Naive thymus-derived CD4-positive, alpha-beta T cell (primary cell): ENCODE measurements at regions of chr10 and their contacts with region 1.

Region 1: GRCh38 chr10:12068449-12069269 is at the start of gene DHTKD1:
- DNase-seq: peak; percentile 96 to 100 (median 98)
- ATAC-seq: peak; percentile 99
- H3K4me3 ChIP-seq: peak within 1 kb of the TSS; percentile 85
- H3K4me3 Mint-ChIP-seq: peak within 1 kb of the TSS; percentile 84 to 92 (median 88)
- H3K27ac ChIP-seq: peak within 1 kb of the TSS; percentile 85
- H3K27ac Mint-ChIP-seq: peak within 1 kb of the TSS; percentile 85 to 99 (median 95)
- H3K4me1 ChIP-seq: peaks cover 6 to 15% of the 10 kb centered on the region in 2 donors
- H3K4me1 Mint-ChIP-seq: peaks cover 12 to 27% (median 20%) of the 10 kb centered on the region in 7 donors
- H3K27me3 ChIP-seq: no peaks in the 10 kb centered on the region
- H3K27me3 Mint-ChIP-seq: no peaks in the 10 kb centered on the region
- total RNA-seq, gene DHTKD1: 10.8 to 25.9 (median 12.5) TPM

Region 2: DNA sequence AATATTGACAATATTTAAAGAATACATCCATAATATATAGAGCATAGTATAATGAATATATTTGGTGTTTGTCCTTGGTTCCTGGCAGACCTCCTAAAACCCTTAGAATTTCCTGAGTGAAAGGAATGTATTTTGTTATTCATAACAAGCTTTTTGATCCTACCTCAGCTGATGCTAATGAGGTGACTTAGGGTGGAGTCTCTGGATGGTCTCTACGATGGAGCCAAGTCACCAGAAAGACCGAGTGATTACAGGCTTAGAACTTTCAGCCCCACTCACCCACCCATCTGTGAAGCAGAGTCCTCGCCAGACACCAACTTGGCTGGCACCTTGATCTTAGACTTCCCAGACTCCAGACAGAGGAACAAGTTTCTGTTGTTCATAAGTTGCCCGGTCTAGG is 62.0 kb before region 1 on chr10:
- CTCF ChIA-PET with region 1: no interaction called
- POLR2A ChIA-PET with region 1: no interaction called
- intact Hi-C with region 1: loop called in 1 of 2 experiments (anchors 5 kb)
- DNase-seq: no peak
- ATAC-seq: no peak
- H3K4me3 ChIP-seq: no peak overlapping the region
- H3K4me3 Mint-ChIP-seq: no peak overlapping the region
- H3K27ac ChIP-seq: no peak overlapping the region
- H3K27ac Mint-ChIP-seq: peak overlapping the region in 7 of 9 donors; percentile 13 to 84 (median 50)
- H3K4me1 ChIP-seq: no peaks in the 10 kb centered on the region
- H3K4me1 Mint-ChIP-seq: peaks cover 0 to 12% (median 0%) of the 10 kb centered on the region in 7 donors
- H3K27me3 ChIP-seq: no peaks in the 10 kb centered on the region
- H3K27me3 Mint-ChIP-seq: no peaks in the 10 kb centered on the region

Region 3: GRCh38 chr10:12027539-12027938 is 41.1 kb before region 1 on chr10:
- CTCF ChIA-PET with region 1: no interaction called
- POLR2A ChIA-PET with region 1: no interaction called
- intact Hi-C with region 1: loop called (anchors 5 kb)
- DNase-seq: no peak
- ATAC-seq: no peak
- H3K4me3 ChIP-seq: no peak overlapping the region
- H3K4me3 Mint-ChIP-seq: peak overlapping the region in 2 of 10 donors; percentile 1 to 9
- H3K27ac ChIP-seq: no peak overlapping the region
- H3K27ac Mint-ChIP-seq: peak overlapping the region in 1 of 9 donors; percentile 3
- H3K4me1 ChIP-seq: peaks cover 0 to 7% of the 10 kb centered on the region in 2 donors
- H3K4me1 Mint-ChIP-seq: peaks cover 17 to 63% (median 57%) of the 10 kb centered on the region in 7 donors
- H3K27me3 ChIP-seq: no peaks in the 10 kb centered on the region
- H3K27me3 Mint-ChIP-seq: no peaks in the 10 kb centered on the region

Region 4: GRCh38 chr10:12181065-12181775 is 112.6 kb after region 1 on chr10:
- CTCF ChIA-PET with region 1: no interaction called
- POLR2A ChIA-PET with region 1: no interaction called
- intact Hi-C with region 1: loop called in 1 of 2 experiments (anchors 2 kb)
- DNase-seq: peak in 8 of 9 donors; percentile 13 to 57 (median 48)
- ATAC-seq: peak; percentile 99
- H3K4me3 ChIP-seq: no peak overlapping the region
- H3K4me3 Mint-ChIP-seq: peak overlapping the region in 7 of 10 donors; percentile 12 to 68 (median 32)
- H3K27ac ChIP-seq: peak overlapping the region; percentile 17
- H3K27ac Mint-ChIP-seq: peak overlapping the region; percentile 54 to 92 (median 78)
- H3K4me1 ChIP-seq: peaks cover 0 to 17% of the 10 kb centered on the region in 2 donors
- H3K4me1 Mint-ChIP-seq: peaks cover 0 to 46% (median 8%) of the 10 kb centered on the region in 7 donors
- H3K27me3 ChIP-seq: no peaks in the 10 kb centered on the region
- H3K27me3 Mint-ChIP-seq: no peaks in the 10 kb centered on the region